ENCODE measurements at regions of chr7 and their contacts with region 1.

Region 1: DNA sequence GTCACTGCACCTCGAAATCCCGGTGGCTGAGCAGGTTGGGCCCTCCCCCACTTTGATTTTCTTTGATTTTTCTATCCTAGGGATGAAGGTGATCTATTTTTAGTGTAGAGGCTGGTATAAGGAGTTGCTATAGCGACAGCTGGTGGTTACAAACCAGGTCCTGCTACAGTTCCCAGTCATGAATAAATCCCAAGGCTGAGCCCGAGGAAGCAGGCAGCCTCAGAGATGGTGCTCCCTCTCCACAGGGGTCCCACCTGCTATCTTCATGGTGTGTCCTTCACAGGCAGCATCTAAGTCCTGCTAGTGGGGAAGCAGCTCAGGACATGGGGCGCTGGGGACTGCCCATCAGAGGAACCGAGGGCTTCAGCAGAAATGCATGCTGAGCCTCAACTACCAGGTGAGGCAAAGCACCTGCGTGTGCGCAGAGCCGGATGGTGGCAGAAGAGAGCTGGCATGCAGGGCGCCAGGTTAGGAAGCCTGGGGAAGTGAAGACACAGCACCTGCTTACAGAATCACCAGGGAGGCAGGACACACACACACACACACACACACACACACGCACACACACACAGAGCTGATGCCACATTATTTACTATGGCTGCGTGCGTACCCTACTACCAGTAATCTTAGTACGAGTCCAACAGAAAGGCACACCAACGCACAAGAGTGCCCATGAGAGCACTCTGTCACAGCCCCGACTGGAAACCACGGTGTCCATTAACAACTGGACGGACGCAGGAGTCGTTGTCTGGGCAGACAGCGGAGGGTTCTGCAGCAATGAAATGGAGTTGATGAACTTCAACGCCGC is 150.9 kb downstream of the PRKAG2 start:
- DNase-seq: no peak
- H3K4me3 ChIP-seq: no peak overlapping the region
- CTCF ChIP-seq: no peak

Region 2: GRCh38 chr7:151705636-151706276 is 20.3 kb before region 1 on chr7:
- CTCF ChIA-PET with region 1: interaction called, 18 read pairs
- POLR2A ChIA-PET with region 1: no interaction called
- DNase-seq: no peak
- H3K4me3 ChIP-seq: no peak overlapping the region
- CTCF ChIP-seq: peak; percentile 67

Region 3: GRCh38 chr7:151715666-151716315 is 10.3 kb before region 1 on chr7:
- CTCF ChIA-PET with region 1: no interaction called
- POLR2A ChIA-PET with region 1: no interaction called
- DNase-seq: no peak
- H3K4me3 ChIP-seq: no peak overlapping the region
- CTCF ChIP-seq: no peak

Region 4: DNA sequence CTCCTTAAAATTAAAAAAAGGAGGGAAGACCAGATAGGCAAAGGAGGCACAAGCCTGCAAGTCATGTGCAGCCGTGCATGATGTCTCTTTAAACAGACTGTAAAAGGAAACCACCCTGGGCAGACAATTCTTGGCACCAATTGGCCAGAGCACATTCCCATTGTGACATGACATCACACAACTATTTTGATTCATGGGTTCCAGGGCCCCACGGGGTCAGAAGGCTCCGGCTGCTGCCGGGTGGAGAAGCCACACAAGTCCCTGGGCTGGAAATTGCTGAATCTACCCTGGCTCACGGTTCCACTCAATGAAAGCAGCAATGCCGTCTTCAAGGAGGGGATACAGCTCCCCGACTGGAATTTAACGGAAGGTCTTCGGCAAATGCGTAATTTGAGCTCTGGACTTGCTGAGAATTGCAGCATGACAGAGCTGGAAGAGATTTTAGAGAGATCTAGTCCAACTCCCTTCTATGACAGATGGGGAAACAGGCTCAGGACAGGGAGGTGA is 10.4 kb after region 1 on chr7:
- CTCF ChIA-PET with region 1: interaction called, 12 read pairs
- POLR2A ChIA-PET with region 1: interaction called, 7 read pairs
- DNase-seq: peak; percentile 87
- H3K4me3 ChIP-seq: peak overlapping the region; percentile 55
- CTCF ChIP-seq: peak; percentile 54